ENCODE measurements at regions of chr12 and their contacts with region 1.

Region 1: GRCh38 chr12:11067514-11067913 is 5.4 kb upstream of the TAS2R46 start:
- DNase-seq: no peak
- H3K4me3 ChIP-seq: no peak overlapping the region
- H3K27ac ChIP-seq: no peak overlapping the region
- H3K4me1 ChIP-seq: peaks cover 7% of the 10 kb centered on the region
- H3K27me3 ChIP-seq: no peaks in the 10 kb centered on the region
- CTCF ChIP-seq: no peak

Region 2: GRCh38 chr12:11014234-11014633 is 53.3 kb before region 1 on chr12:
- intact Hi-C with region 1: loop called (anchors 5 kb)
- DNase-seq: no peak
- H3K4me3 ChIP-seq: no peak overlapping the region
- H3K27ac ChIP-seq: no peak overlapping the region
- H3K4me1 ChIP-seq: no peaks in the 10 kb centered on the region
- H3K27me3 ChIP-seq: no peaks in the 10 kb centered on the region
- CTCF ChIP-seq: no peak